ENCODE measurements at regions of chr10 and their contacts with region 1.

Region 1: DNA sequence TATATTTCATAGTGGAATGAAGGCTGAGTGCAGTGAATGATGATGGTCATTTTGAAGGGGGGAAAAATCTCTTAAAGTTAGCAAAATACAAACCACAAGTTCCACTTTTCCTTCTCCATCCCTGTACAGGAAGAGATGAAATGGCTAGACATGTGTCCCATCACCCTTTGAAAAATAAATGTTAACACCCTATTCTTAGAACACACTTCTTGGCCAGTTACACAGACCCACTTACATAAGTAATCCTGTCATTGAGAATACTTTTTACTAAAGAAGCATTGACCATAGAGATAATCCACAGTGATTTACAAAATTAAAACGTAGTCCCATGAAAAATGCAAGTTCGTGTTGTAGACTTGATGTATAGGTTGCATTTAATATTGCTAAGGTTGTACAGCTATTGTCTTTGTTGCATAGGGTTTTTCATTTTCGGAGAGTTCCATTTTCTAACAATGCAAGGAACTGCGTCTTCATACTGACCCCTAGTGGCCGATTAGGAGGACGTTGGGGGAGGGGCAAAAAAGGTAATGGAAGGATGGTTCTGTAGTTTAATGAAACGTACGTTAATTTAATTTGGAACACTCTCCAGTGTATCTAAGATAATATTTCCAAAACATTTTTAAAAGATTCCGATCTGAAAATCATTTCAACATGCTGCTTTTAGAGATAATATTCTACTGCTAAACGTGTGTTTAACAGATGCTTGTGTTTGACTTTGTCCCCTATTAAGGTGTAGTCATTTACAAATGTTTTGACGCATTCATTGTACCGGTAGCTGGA is 60.9 kb downstream of the ARMC3 start:
- DNase-seq: peak; percentile 73
- ATAC-seq: peak; percentile 68
- H3K4me3 Mint-ChIP-seq: no peak overlapping the region
- H3K27ac Mint-ChIP-seq: no peak overlapping the region
- H3K4me1 Mint-ChIP-seq: peaks cover 15% of the 10 kb centered on the region
- H3K27me3 Mint-ChIP-seq: peaks cover 5% of the 10 kb centered on the region

Region 2: GRCh38 chr10:21495752-21496342 is 1492.9 kb before region 1 on chr10:
- CTCF ChIA-PET with region 1: no interaction called
- POLR2A ChIA-PET with region 1: no interaction called
- intact Hi-C with region 1: loop called in 1 of 2 experiments (anchors 1 kb)
- DNase-seq: peak; percentile 92
- ATAC-seq: peak; percentile 86
- H3K4me3 Mint-ChIP-seq: peak overlapping the region; percentile 76
- H3K27ac Mint-ChIP-seq: no peak overlapping the region
- H3K4me1 Mint-ChIP-seq: peaks cover 17% of the 10 kb centered on the region
- H3K27me3 Mint-ChIP-seq: peaks cover 47% of the 10 kb centered on the region

Region 3: DNA sequence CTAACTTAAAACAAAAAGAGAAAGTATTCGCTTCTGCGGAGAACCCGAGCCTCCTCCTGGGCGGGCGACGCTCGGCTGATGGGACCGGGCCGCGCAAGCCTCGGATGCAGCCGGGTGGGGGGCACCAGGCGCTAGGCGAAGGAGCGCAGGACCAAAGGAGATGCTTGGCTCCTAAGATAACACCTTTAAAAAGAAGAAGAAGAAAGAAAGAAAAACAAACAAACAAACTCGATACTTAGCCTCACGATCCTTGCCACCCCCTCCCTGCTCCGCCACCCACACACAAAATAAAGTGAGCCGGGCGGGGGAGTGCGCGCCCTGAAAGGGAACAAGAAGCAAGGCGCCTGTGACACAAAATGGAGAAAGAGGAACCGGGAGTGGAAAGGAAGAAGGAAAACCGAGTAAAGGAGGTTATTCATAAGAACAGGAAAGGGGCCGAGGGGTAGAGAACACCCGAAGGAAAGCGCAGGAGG is 737.0 kb before region 1 on chr10:
- CTCF ChIA-PET with region 1: interaction called, 3 read pairs
- POLR2A ChIA-PET with region 1: no interaction called
- intact Hi-C with region 1: loop called in 1 of 2 experiments (anchors 5 kb)
- DNase-seq: peak; percentile 83
- ATAC-seq: peak; percentile 42
- H3K4me3 Mint-ChIP-seq: peak overlapping the region; percentile 93
- H3K27ac Mint-ChIP-seq: peak overlapping the region; percentile 100
- H3K4me1 Mint-ChIP-seq: peaks cover 35% of the 10 kb centered on the region
- H3K27me3 Mint-ChIP-seq: peaks cover 5% of the 10 kb centered on the region

Region 4: GRCh38 chr10:22340362-22341189 is 648.2 kb before region 1 on chr10:
- CTCF ChIA-PET with region 1: interaction called, 3 read pairs
- POLR2A ChIA-PET with region 1: no interaction called
- intact Hi-C with region 1: loop called (anchors 2 to 5 kb)
- DNase-seq: peak; percentile 72
- ATAC-seq: peak; percentile 48
- H3K4me3 Mint-ChIP-seq: peak overlapping the region; percentile 78
- H3K27ac Mint-ChIP-seq: peak overlapping the region; percentile 89
- H3K4me1 Mint-ChIP-seq: peaks cover 34% of the 10 kb centered on the region
- H3K27me3 Mint-ChIP-seq: peaks cover 58% of the 10 kb centered on the region

Region 5: DNA sequence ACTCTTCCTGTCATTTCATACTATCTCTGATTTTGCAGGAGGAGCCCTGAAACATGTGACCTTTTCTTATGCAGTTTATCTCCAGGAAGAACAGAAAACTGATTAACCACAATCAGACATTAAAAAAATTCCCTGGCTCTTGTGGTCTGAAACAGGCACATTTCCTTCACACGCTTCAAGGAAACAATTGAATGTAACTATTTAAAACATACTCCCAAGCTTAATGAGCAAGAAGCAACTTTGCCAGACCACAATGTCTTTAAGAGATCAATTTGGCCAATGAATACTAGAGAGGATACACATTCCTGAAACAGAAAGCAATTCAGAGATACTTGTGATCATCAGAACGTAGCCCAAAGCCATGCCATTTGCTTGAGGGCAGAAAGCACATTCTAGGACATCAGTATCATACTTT is 340.2 kb before region 1 on chr10:
- CTCF ChIA-PET with region 1: interaction called, 4 read pairs
- POLR2A ChIA-PET with region 1: no interaction called
- intact Hi-C with region 1: loop called in 1 of 2 experiments (anchors 5 kb)
- DNase-seq: no peak
- ATAC-seq: peak; percentile 8
- H3K4me3 Mint-ChIP-seq: peak overlapping the region; percentile 49
- H3K27ac Mint-ChIP-seq: peak overlapping the region; percentile 93
- H3K4me1 Mint-ChIP-seq: peaks cover 90% of the 10 kb centered on the region
- H3K27me3 Mint-ChIP-seq: no peaks in the 10 kb centered on the region

Region 6: GRCh38 chr10:23053036-23053435 is 64.3 kb after region 1 on chr10:
- CTCF ChIA-PET with region 1: no interaction called
- POLR2A ChIA-PET with region 1: no interaction called
- intact Hi-C with region 1: no loop called
- DNase-seq: no peak
- ATAC-seq: no peak
- H3K4me3 Mint-ChIP-seq: no peak overlapping the region
- H3K27ac Mint-ChIP-seq: no peak overlapping the region
- H3K4me1 Mint-ChIP-seq: no peaks in the 10 kb centered on the region
- H3K27me3 Mint-ChIP-seq: peaks cover 16% of the 10 kb centered on the region

Region 7: DNA sequence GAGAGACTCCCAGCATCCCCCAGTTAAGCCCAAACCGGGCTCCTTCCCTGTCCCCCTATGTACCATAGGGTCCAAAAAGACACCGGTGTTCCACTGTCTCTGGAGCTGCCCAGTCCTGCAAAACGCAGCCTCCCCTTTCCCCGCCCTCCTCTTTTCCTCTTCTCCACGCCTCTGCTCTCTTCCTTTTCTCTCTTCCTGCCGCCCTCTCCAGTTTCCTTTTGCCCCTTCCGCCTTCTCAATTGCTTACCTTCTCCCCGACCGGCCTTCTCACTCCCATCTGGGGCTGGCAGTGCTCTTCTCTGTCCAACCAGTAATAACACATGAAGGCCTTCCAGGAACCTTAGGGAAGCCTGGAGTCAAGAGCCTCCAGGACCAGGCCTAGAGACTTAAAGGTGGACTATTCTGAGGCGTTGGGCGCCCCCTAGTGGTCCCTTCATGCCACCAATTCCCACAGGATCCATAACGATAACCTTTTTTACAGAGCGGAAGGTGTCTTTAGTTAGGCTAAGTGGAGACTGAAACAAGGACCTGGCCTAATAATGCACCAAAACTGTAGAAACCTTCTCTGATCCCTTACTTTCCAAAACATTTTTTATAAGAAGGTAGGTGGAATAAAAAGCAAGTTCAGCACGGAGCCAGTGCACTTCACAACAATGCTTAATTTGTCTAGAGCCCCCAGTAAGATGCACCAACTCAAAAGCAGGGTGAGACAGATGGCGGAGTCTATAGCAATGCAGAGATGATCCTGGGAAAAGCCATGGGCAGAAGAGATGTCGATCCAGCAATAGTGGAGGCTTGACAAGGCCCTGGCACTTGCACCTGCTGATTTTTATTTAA is 79.4 kb after region 1 on chr10:
- CTCF ChIA-PET with region 1: interaction called, 4 read pairs
- POLR2A ChIA-PET with region 1: no interaction called
- intact Hi-C with region 1: loop called (anchors 2 to 5 kb)
- DNase-seq: peak; percentile 83
- ATAC-seq: peak; percentile 88
- H3K4me3 Mint-ChIP-seq: no peak overlapping the region
- H3K27ac Mint-ChIP-seq: no peak overlapping the region
- H3K4me1 Mint-ChIP-seq: peaks cover 4% of the 10 kb centered on the region
- H3K27me3 Mint-ChIP-seq: peaks cover 2% of the 10 kb centered on the region

Measured in activated CD4-positive, alpha-beta T cell treated with anti-CD3 and anti-CD28 coated beads for 36 hours (primary cell).